ENCODE measurements at regions of chr19 and their contacts with region 1.

Region 1: DNA sequence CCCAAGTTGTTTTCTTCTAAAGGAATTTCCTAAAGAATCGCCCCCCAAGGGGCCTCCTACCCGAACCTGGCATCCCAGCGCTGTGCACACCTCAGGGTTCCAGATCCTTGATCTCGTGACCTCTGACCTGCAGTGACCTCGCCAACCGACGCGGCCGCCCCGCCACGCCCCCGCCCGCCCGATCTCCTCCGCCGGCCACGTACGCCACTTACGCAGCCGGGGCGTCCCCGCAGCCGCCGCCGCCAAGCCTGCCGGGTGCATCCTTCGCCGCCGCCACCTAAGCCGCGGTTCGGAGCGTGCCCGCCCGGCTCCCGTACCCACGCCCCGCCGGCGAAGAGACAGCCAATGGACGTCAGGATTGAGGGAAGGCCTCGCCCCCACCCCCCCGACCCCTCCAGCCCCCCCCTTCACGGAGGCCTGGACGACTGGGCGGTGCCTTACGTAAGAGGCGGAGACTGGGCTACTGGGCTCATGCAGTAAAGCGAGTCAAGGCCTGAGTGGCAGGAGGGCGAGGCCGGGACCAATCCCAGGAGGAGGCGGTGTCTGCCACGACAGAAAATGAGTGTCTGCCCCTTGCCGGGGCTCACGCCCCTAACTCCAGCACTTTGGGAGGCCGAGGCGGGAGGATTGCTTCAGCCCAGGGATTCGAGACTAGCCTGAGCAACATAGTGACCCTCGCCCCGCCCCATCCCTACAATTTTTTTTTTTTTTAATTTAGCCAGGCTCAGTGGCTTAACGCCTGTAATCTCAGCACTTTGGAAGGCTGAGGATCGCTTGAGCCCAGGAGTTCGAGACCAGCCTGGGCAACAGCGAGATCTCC is at the start of gene YIF1B:
- DNase-seq: peak; percentile 97 to 99
- H3K4me3 ChIP-seq: peak within 1 kb of the TSS; percentile 68 to 70
- H3K27ac ChIP-seq: peak within 1 kb of the TSS; percentile 79 to 85
- H3K4me1 ChIP-seq: peaks cover 7 to 25% of the 10 kb centered on the region in 2 donors
- H3K27me3 ChIP-seq: no peaks in the 10 kb centered on the region
- CTCF ChIP-seq: no peak
- total RNA-seq, gene YIF1B: 24.7 TPM

Region 2: DNA sequence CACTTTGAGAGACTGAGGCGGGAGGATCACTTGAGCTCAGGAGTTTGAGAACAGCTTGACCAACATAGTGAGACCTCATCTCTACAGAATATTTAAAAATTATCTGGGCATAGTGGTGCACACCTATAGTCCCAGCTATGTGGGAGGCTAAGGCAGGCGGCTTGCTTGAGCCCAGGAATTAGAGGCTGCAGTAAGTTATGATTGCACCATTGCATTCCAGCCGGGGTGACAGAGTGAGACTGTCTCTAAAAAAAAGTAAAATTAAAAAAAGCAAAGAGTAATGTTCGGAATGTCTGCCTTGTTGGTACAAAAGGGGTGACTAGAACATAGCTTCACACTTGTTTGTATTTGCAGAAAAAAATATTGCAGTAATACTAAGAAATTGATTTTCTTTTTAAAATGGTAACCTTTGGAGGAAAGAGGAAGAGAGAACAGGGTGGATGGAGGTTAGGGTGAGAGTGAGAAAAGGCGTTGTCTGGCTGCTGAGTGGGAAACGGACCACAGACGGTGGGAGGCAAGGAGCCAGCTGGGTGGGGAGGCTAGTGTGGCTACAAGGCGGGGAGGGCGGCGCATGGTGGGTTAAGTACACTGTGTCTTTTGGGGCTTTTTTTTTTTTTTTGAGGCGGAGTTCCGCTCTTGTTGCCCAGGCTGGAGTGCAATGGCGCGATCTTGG is 69.9 kb before region 1 on chr19:
- intact Hi-C with region 1: loop called (anchors 2 kb)
- DNase-seq: peak in 1 of 2 donors; percentile 87
- H3K4me3 ChIP-seq: peak overlapping the region in 1 of 2 donors; percentile 6
- H3K27ac ChIP-seq: peak overlapping the region; percentile 90 to 99
- H3K4me1 ChIP-seq: peaks cover 18 to 63% of the 10 kb centered on the region in 2 donors
- H3K27me3 ChIP-seq: no peaks in the 10 kb centered on the region
- CTCF ChIP-seq: no peak

Region 3: DNA sequence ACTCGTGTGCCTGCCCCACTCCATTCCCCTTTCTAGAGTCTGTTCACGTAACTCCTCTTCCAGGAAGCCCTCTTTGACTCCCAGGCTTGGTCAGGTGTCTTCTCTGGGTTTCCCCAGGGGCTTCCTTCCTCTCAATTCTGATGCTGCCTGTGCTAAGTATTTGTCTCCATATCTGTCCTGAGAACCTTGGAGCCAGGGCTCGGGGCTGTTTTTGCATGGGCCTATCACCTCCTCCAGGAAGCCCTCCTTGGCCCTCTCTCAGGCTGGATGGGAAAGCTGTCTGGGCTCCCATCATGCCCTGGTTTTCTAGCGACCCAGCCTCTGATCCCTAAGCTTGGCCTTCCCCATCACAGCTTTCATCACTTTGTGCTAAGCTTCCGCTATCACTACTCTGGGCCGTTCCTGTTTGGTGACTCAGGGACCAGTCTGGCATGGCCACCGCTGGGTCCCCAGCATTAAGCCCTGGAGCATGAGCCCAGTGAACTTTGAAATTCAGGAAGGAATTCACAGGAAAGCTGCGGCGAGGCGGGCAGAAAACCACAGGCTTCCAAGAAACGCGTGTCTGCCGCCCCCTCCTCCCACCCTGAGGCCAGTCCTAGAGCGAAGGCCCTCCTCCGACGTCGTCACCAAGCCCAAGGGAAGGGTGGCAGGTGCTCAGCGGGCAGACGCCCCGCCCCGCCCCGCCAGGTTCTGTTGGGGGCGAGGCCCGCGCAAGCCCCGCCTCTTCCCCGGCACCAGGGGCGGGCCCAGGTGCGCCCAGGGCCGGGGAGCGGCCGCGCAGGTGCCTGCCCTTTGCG is 52.0 kb before region 1 on chr19:
- intact Hi-C with region 1: loop called (anchors 2 kb)
- DNase-seq: peak; percentile 42 to 89
- H3K4me3 ChIP-seq: peak overlapping the region; percentile 65 to 76
- H3K27ac ChIP-seq: peak overlapping the region; percentile 98
- H3K4me1 ChIP-seq: peaks cover 7 to 33% of the 10 kb centered on the region in 2 donors
- H3K27me3 ChIP-seq: no peaks in the 10 kb centered on the region
- CTCF ChIP-seq: no peak